T-cell (primary cell): ENCODE measurements at regions of chr11 and their contacts with region 1.

Region 1: DNA sequence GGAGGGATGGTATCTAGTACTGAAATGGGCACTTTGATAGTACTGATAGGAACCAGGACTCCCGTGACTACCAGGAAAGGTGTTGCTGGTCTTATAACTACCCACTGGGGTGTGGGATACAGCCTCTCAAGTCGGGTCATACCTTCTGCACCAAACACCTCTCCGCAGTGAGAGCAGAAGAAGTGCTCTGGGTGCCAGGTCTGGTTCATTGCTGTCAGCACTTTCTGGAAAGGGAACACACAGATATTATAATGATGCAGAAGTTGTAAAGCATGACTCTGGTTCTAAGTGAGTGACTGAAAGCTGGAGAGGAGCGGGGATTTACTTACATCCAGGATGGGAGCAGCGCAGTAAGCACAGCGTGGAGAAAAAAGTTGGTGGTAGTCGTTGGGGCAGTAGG is 26.0 kb downstream of the LPXN start:
- DNase-seq: no peak
- ATAC-seq: no peak
- H3K4me3 ChIP-seq: no peak overlapping the region
- H3K4me3 Mint-ChIP-seq: no peak overlapping the region
- H3K27ac ChIP-seq: no peak overlapping the region
- H3K27ac Mint-ChIP-seq: no peak overlapping the region
- H3K4me1 ChIP-seq: peaks cover 0 to 3% of the 10 kb centered on the region in 2 experiments
- H3K4me1 Mint-ChIP-seq: peaks cover 20 to 41% (median 22%) of the 10 kb centered on the region in 3 donors
- H3K27me3 ChIP-seq: no peaks in the 10 kb centered on the region
- H3K27me3 Mint-ChIP-seq: no peaks in the 10 kb centered on the region

Region 2: GRCh38 chr11:58513747-58514367 is 35.8 kb before region 1 on chr11:
- CTCF ChIA-PET with region 1: no interaction called
- POLR2A ChIA-PET with region 1: no interaction called
- DNase-seq: peak in 1 of 35 experiments; percentile 51
- ATAC-seq: peak in 2 of 4 experiments; percentile 20 to 53
- H3K4me3 ChIP-seq: no peak overlapping the region
- H3K4me3 Mint-ChIP-seq: no peak overlapping the region
- H3K27ac ChIP-seq: no peak overlapping the region
- H3K27ac Mint-ChIP-seq: no peak overlapping the region
- H3K4me1 ChIP-seq: no peaks in the 10 kb centered on the region
- H3K4me1 Mint-ChIP-seq: no peaks in the 10 kb centered on the region
- H3K27me3 ChIP-seq: no peaks in the 10 kb centered on the region
- H3K27me3 Mint-ChIP-seq: no peaks in the 10 kb centered on the region

Region 3: GRCh38 chr11:58597486-58598144 is 48.0 kb after region 1 on chr11:
- CTCF ChIA-PET with region 1: interaction called in 1 of 2 experiments, 10 read pairs
- POLR2A ChIA-PET with region 1: interaction called in 1 of 2 experiments, 7 read pairs
- DNase-seq: peak in 1 of 35 experiments; percentile 6
- ATAC-seq: peak in 1 of 4 experiments; percentile 71
- H3K4me3 ChIP-seq: no peak overlapping the region
- H3K4me3 Mint-ChIP-seq: peak overlapping the region in 2 of 3 donors; percentile 34 to 64
- H3K27ac ChIP-seq: no peak overlapping the region
- H3K27ac Mint-ChIP-seq: peak overlapping the region; percentile 48 to 82
- H3K4me1 ChIP-seq: peaks cover 5 to 25% of the 10 kb centered on the region in 2 experiments
- H3K4me1 Mint-ChIP-seq: peaks cover 89 to 95% (median 92%) of the 10 kb centered on the region in 3 donors
- H3K27me3 ChIP-seq: no peaks in the 10 kb centered on the region
- H3K27me3 Mint-ChIP-seq: no peaks in the 10 kb centered on the region

Region 4: GRCh38 chr11:58616594-58616993 is 67.0 kb after region 1 on chr11:
- CTCF ChIA-PET with region 1: no interaction called
- POLR2A ChIA-PET with region 1: no interaction called
- DNase-seq: no peak
- ATAC-seq: no peak
- H3K4me3 ChIP-seq: no peak overlapping the region
- H3K4me3 Mint-ChIP-seq: no peak overlapping the region
- H3K27ac ChIP-seq: no peak overlapping the region
- H3K27ac Mint-ChIP-seq: no peak overlapping the region
- H3K4me1 ChIP-seq: peaks cover 0 to 6% of the 10 kb centered on the region in 2 experiments
- H3K4me1 Mint-ChIP-seq: peaks cover 8 to 23% (median 10%) of the 10 kb centered on the region in 3 donors
- H3K27me3 ChIP-seq: no peaks in the 10 kb centered on the region
- H3K27me3 Mint-ChIP-seq: no peaks in the 10 kb centered on the region

Region 5: GRCh38 chr11:58675334-58676155 is 125.9 kb after region 1 on chr11:
- CTCF ChIA-PET with region 1: no interaction called
- POLR2A ChIA-PET with region 1: no interaction called
- DNase-seq: peak; percentile 27 to 82 (median 61)
- ATAC-seq: peak; percentile 70 to 86 (median 76)
- H3K4me3 ChIP-seq: no peak overlapping the region
- H3K4me3 Mint-ChIP-seq: no peak overlapping the region
- H3K27ac ChIP-seq: no peak overlapping the region
- H3K27ac Mint-ChIP-seq: no peak overlapping the region
- H3K4me1 ChIP-seq: no peaks in the 10 kb centered on the region
- H3K4me1 Mint-ChIP-seq: no peaks in the 10 kb centered on the region
- H3K27me3 ChIP-seq: peaks cover 0 to 7% of the 10 kb centered on the region in 2 experiments
- H3K27me3 Mint-ChIP-seq: peaks cover 4 to 9% of the 10 kb centered on the region in 2 donors